HCT116 (cell line): ENCODE measurements at regions of chr9 and their contacts with region 1.

Region 1: GRCh38 chr9:22244141-22245011 is 202.2 kb upstream of the DMRTA1 start:
- DNase-seq: peak; percentile 40
- ATAC-seq: peak; percentile 89
- H3K4me3 ChIP-seq: no peak overlapping the region
- H3K27ac ChIP-seq: no peak overlapping the region
- H3K4me1 ChIP-seq: peaks cover 8% of the 10 kb centered on the region in 2 experiments; a peak in 3 of 4 replicates
- H3K27me3 ChIP-seq: peaks cover 3% of the 10 kb centered on the region; the same call in 1 of the 2 replicates
- CTCF ChIP-seq: peak; percentile 53 to 63 (median 57); a peak in 5 of 6 replicates
- POLR2A ChIP-seq: no peak
- RAD21 ChIP-seq: peak; percentile 68

Region 2: GRCh38 chr9:21836437-21837161 is 407.8 kb before region 1 on chr9:
- CTCF ChIA-PET with region 1: interaction called, 10 read pairs
- POLR2A ChIA-PET with region 1: no interaction called
- RAD21 ChIA-PET with region 1: no interaction called
- intact Hi-C with region 1: no loop called
- DNase-seq: peak; percentile 94
- ATAC-seq: peak; percentile 80
- H3K4me3 ChIP-seq: peak overlapping the region; percentile 6 to 33; a peak in 2 of 4 replicates
- H3K27ac ChIP-seq: peak overlapping the region; percentile 66
- H3K4me1 ChIP-seq: peaks cover 18 to 62% of the 10 kb centered on the region in 2 experiments
- H3K27me3 ChIP-seq: no peaks in the 10 kb centered on the region
- CTCF ChIP-seq: no peak
- POLR2A ChIP-seq: no peak
- RAD21 ChIP-seq: no peak; the same call in 1 of the 2 replicates

Region 3: DNA sequence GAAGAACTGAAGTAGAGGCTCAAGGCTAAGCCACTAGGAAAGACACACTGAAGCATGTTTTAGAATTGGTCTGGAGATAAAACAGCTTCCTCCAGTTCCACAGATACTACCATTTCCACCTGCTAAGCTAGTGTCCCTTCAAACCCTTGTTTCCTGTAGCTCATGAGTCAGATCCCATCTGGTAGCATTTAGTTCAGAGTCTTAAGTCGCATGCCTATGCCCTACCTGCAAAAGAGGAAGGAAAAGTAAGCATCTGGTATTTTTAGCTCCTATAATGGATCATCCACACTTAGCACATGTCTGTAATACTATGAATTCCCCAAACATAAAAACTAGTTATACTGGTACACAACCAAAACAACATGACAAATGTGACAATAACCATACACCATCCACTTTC is 342.2 kb before region 1 on chr9:
- CTCF ChIA-PET with region 1: no interaction called
- POLR2A ChIA-PET with region 1: no interaction called
- RAD21 ChIA-PET with region 1: no interaction called
- intact Hi-C with region 1: loop called (anchors 10 kb)
- DNase-seq: no peak
- ATAC-seq: no peak
- H3K4me3 ChIP-seq: no peak overlapping the region
- H3K27ac ChIP-seq: no peak overlapping the region
- H3K4me1 ChIP-seq: no peaks in the 10 kb centered on the region
- H3K27me3 ChIP-seq: no peaks in the 10 kb centered on the region
- CTCF ChIP-seq: no peak
- POLR2A ChIP-seq: no peak
- RAD21 ChIP-seq: no peak

Region 4: DNA sequence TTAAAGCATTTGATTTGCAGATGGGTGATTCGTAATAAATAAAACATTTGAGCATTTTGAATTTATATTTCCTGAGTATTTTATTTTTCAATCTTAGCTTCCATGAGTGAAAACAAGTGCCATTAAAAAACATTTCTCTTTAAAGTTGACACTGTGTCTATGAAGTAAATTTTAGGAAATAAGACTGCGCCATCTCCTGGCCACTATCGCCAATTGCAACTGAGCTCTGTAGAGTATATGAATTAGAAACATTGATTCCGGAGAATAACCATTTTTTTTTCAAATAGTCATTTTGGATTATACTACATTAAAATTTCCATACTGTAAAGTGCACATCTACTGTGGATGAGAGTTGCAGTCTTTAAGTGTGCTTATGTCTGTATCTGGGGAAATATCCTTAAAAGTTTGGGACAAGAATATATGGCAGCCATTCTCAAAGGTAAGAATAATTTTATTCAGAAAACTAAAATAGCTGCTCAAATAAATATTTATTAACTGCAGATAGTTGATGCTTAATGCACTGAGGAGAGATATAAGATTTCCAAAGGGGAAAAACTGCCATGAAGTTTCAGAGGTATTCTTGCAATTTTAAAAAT is 208.1 kb after region 1 on chr9:
- CTCF ChIA-PET with region 1: interaction called, 24 read pairs
- POLR2A ChIA-PET with region 1: no interaction called
- RAD21 ChIA-PET with region 1: interaction called in 1 of 2 experiments, 6 read pairs
- intact Hi-C with region 1: loop called (anchors 1 kb)
- DNase-seq: peak; percentile 29
- ATAC-seq: peak; percentile 66
- H3K4me3 ChIP-seq: no peak overlapping the region
- H3K27ac ChIP-seq: no peak overlapping the region
- H3K4me1 ChIP-seq: no peaks in the 10 kb centered on the region
- H3K27me3 ChIP-seq: peaks cover 21% of the 10 kb centered on the region
- CTCF ChIP-seq: peak; percentile 70 to 89 (median 78)
- POLR2A ChIP-seq: no peak
- RAD21 ChIP-seq: peak; percentile 75